CD4-positive, alpha-beta memory T cell (primary cell): ENCODE measurements at regions of chr3 and their contacts with region 1.

Region 1: DNA sequence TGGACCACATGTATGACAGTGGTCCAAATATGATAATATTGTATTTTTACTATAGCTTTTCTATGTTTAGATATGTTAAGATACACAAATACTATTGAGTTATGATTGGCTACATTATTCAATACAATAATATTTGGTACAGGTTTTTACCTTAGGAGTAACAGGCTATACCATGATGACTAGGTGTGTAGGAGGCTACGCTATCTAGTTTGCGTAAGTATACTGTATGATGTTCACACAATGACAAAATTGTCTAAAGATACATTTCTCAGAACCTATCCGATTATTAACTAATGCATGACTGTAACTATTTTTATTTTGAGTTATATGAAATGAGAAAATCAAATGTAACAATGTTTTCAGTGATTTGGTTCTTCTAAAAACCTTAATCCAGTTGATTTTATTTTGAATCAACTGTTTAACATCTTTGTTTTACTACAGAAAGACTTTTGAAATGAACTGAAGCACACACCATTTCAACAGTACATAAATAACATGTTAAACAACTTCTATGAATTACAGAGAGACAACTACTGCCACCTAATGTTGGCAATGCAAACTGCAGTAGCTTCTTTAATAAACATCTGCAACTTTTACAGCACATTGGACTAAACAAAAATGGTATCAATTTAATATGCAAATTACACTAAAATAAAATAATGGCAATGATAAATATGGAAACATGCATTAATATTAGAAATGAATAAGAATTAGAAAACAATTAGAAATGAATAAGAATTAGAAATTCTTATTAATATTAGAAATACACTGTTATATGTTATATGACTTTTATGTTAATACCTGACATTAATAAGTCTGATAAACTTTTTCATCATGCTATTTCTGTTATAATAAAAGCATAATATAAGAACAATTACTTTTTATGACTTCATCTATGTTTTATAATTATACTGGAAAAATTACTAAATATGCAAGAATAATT is 255.7 kb downstream of the MBNL1 start:
- DNase-seq: peak in 4 of 5 donors; percentile 25 to 43 (median 37)
- H3K4me3 ChIP-seq: no peak overlapping the region
- H3K4me3 Mint-ChIP-seq: no peak overlapping the region
- H3K27ac ChIP-seq: no peak overlapping the region
- H3K27ac Mint-ChIP-seq: no peak overlapping the region
- H3K4me1 ChIP-seq: no peaks in the 10 kb centered on the region
- H3K4me1 Mint-ChIP-seq: no peaks in the 10 kb centered on the region
- H3K27me3 ChIP-seq: no peaks in the 10 kb centered on the region
- H3K27me3 Mint-ChIP-seq: no peaks in the 10 kb centered on the region

Region 2: DNA sequence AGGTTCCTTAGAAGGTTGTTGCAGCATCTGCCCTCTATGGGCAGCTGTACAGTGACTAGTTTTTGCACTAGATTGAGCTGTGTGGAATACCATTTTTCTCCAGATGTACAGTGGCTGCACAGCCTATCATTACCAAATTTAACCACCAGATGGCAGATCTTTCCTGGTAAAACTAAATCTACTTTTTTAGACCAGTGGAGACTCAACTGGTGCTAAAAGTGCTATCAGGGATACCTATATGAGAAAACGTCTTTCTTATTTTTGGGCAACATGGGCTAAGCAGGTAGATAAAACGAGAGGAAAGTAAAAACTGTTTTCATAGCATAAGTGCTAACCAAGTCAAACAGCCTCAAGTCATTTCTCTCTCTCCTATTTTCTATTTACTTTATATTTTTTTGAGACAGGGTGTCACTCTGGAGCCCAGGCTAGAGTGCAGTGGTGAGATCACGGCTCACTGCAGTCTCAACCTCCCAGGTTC is 1084.8 kb before region 1 on chr3:
- CTCF ChIA-PET with region 1: interaction called, 9 read pairs
- POLR2A ChIA-PET with region 1: no interaction called
- intact Hi-C with region 1: loop called (anchors 1 kb)
- DNase-seq: peak in 4 of 5 donors; percentile 17 to 30 (median 22)
- H3K4me3 ChIP-seq: no peak overlapping the region
- H3K4me3 Mint-ChIP-seq: no peak overlapping the region
- H3K27ac ChIP-seq: no peak overlapping the region
- H3K27ac Mint-ChIP-seq: no peak overlapping the region
- H3K4me1 ChIP-seq: no peaks in the 10 kb centered on the region
- H3K4me1 Mint-ChIP-seq: no peaks in the 10 kb centered on the region
- H3K27me3 ChIP-seq: no peaks in the 10 kb centered on the region
- H3K27me3 Mint-ChIP-seq: peaks cover 0 to 2% of the 10 kb centered on the region in 2 donors

Region 3: GRCh38 chr3:151468284-151468917 is 1056.1 kb before region 1 on chr3:
- CTCF ChIA-PET with region 1: interaction called, 29 read pairs
- POLR2A ChIA-PET with region 1: no interaction called
- intact Hi-C with region 1: no loop called
- DNase-seq: peak in 4 of 5 donors; percentile 34 to 51 (median 38)
- H3K4me3 ChIP-seq: no peak overlapping the region
- H3K4me3 Mint-ChIP-seq: no peak overlapping the region
- H3K27ac ChIP-seq: no peak overlapping the region
- H3K27ac Mint-ChIP-seq: no peak overlapping the region
- H3K4me1 ChIP-seq: no peaks in the 10 kb centered on the region
- H3K4me1 Mint-ChIP-seq: no peaks in the 10 kb centered on the region
- H3K27me3 ChIP-seq: no peaks in the 10 kb centered on the region
- H3K27me3 Mint-ChIP-seq: peaks cover 8 to 10% of the 10 kb centered on the region in 2 donors

Region 4: DNA sequence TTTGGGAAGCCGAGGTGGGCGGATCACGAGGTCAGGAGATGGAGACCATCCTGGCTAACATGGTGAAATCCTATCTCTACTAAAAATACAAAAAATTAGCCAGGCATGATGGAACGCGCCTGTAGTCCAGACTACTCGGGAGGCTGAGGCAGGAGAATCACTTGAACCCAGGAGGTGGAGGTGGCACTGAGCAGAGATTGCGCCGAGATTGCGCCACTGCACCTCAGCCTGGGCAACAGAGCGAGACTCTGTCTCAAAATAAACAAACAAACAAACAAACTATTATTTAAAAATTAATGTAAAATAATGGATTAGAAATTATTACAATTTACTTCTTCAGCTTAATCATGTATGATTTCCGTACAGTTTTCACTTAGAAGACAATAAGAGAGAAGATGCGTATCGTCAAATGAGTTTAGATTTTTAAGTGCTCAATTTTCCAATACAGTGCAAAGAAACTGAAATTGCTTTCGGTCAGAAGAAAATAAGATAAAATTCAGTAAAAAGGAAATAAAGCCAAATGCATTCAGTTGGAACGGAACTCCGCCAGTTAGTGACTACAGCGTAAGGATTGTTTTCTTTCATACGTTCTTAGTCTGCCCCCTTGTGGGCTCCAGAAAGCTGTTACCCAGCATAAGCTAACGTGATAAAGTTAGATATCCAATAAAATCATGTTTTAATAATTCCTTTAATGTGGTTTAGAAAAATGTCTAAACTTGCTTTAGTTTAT is 685.7 kb before region 1 on chr3:
- CTCF ChIA-PET with region 1: no interaction called
- POLR2A ChIA-PET with region 1: no interaction called
- intact Hi-C with region 1: loop called (anchors 10 kb)
- DNase-seq: peak in 4 of 5 donors; percentile 19 to 32 (median 30)
- H3K4me3 ChIP-seq: no peak overlapping the region
- H3K4me3 Mint-ChIP-seq: no peak overlapping the region
- H3K27ac ChIP-seq: no peak overlapping the region
- H3K27ac Mint-ChIP-seq: no peak overlapping the region
- H3K4me1 ChIP-seq: no peaks in the 10 kb centered on the region
- H3K4me1 Mint-ChIP-seq: peaks cover 0 to 2% (median under 1%) of the 10 kb centered on the region in 4 donors
- H3K27me3 ChIP-seq: no peaks in the 10 kb centered on the region
- H3K27me3 Mint-ChIP-seq: peaks cover 5 to 7% of the 10 kb centered on the region in 2 donors

Region 5: DNA sequence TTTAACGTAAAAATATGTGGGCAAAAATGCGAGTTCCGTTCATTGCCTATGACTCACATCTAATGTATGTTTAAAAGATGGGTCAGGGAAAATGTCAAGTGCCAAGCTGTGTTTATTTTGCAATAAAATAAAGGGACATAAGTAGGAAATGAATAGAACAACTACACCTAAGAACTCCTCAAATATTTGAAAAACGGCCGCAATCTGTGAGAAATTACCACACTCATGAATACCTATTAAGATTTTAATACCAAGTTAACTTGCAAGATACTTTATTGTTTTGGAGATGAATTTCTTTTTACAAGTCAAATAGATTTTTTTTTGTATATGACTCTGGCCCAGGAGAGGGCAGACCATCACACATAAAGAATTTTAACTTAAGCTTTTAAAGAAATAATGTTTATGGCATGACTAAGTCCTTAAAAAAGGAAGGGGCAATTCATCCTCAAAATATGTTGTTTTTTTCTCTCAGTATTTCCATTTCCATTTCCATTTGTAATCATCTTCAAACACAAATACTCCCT is 498.4 kb before region 1 on chr3:
- CTCF ChIA-PET with region 1: no interaction called
- POLR2A ChIA-PET with region 1: no interaction called
- intact Hi-C with region 1: loop called (anchors 1 kb)
- DNase-seq: no peak
- H3K4me3 ChIP-seq: no peak overlapping the region
- H3K4me3 Mint-ChIP-seq: no peak overlapping the region
- H3K27ac ChIP-seq: no peak overlapping the region
- H3K27ac Mint-ChIP-seq: no peak overlapping the region
- H3K4me1 ChIP-seq: no peaks in the 10 kb centered on the region
- H3K4me1 Mint-ChIP-seq: peaks cover 0 to 2% (median 0%) of the 10 kb centered on the region in 4 donors
- H3K27me3 ChIP-seq: no peaks in the 10 kb centered on the region
- H3K27me3 Mint-ChIP-seq: peaks cover 0 to 2% of the 10 kb centered on the region in 2 donors

Region 6: DNA sequence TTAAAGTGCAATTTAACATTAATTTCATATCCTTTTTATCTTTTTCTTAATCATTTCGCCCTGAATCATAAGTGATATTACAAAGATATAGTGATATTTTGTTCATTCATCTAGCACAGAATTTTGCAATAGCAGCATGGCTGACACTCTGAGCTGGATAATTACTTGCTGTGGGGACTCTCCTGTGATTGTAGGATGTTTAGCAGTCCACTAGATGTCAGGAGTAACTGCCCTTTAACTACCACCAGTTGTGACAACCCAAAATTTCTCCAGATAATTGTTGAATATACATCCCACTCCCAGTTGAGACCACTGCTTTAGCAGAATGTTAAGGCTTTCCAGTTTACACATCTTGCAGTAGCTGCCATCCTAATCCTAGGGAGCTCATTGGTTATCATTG is 452.5 kb before region 1 on chr3:
- CTCF ChIA-PET with region 1: interaction called, 26 read pairs
- POLR2A ChIA-PET with region 1: no interaction called
- intact Hi-C with region 1: loop called (anchors 1 kb)
- DNase-seq: peak in 4 of 5 donors; percentile 22 to 45 (median 36)
- H3K4me3 ChIP-seq: no peak overlapping the region
- H3K4me3 Mint-ChIP-seq: no peak overlapping the region
- H3K27ac ChIP-seq: no peak overlapping the region
- H3K27ac Mint-ChIP-seq: no peak overlapping the region
- H3K4me1 ChIP-seq: no peaks in the 10 kb centered on the region
- H3K4me1 Mint-ChIP-seq: peaks cover 0 to 3% (median 1%) of the 10 kb centered on the region in 4 donors
- H3K27me3 ChIP-seq: no peaks in the 10 kb centered on the region
- H3K27me3 Mint-ChIP-seq: no peaks in the 10 kb centered on the region

Region 7: DNA sequence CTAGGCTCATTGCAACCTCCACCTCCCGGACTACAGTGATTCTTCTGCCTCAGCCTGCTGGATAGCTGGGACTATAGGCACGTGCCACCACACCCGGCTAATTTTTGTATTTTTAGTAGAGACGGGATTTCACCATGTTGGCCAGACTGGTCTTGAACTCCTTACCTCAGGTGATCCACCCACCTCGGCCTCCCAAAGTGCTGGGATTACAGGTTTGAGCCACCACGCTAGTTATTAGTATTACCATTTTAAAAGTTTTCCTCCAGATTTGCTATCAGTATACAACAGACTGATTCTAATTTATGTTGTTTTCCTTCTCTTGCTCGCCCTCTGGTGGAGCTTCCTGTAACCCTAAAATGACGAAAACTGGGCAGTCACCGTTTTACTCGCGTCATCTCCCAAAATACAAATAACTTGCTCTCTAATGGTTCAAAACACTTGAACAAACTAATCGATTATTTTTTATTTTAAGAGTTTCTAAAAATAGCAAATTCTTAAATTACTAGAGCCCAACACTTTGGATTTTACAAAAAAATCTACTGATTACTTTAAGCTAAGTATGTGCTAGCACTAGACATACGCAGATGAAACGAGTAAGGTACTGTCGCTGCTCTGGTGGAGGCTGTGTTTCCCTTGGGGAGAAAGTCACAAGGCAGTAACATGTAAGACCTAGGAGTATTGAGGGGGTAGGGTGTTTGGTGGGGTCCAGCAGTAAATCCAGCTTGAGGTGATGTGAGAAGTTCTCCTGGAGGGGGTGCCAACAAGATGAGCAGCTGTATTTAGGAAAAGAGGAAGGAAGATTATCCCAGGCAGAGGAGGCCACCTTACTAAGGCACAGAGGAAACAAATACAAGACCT is 52.4 kb before region 1 on chr3:
- CTCF ChIA-PET with region 1: no interaction called
- POLR2A ChIA-PET with region 1: no interaction called
- intact Hi-C with region 1: loop called (anchors 2 kb)
- DNase-seq: peak; percentile 65 to 74 (median 70)
- H3K4me3 ChIP-seq: no peak overlapping the region
- H3K4me3 Mint-ChIP-seq: peak overlapping the region; percentile 35 to 81 (median 65)
- H3K27ac ChIP-seq: peak overlapping the region; percentile 36
- H3K27ac Mint-ChIP-seq: peak overlapping the region; percentile 18 to 93 (median 85)
- H3K4me1 ChIP-seq: peaks cover 11% of the 10 kb centered on the region
- H3K4me1 Mint-ChIP-seq: peaks cover 13 to 19% (median 13%) of the 10 kb centered on the region in 4 donors
- H3K27me3 ChIP-seq: no peaks in the 10 kb centered on the region
- H3K27me3 Mint-ChIP-seq: no peaks in the 10 kb centered on the region